ENCODE measurements at regions of chr6 and their contacts with region 1.

Region 1: DNA sequence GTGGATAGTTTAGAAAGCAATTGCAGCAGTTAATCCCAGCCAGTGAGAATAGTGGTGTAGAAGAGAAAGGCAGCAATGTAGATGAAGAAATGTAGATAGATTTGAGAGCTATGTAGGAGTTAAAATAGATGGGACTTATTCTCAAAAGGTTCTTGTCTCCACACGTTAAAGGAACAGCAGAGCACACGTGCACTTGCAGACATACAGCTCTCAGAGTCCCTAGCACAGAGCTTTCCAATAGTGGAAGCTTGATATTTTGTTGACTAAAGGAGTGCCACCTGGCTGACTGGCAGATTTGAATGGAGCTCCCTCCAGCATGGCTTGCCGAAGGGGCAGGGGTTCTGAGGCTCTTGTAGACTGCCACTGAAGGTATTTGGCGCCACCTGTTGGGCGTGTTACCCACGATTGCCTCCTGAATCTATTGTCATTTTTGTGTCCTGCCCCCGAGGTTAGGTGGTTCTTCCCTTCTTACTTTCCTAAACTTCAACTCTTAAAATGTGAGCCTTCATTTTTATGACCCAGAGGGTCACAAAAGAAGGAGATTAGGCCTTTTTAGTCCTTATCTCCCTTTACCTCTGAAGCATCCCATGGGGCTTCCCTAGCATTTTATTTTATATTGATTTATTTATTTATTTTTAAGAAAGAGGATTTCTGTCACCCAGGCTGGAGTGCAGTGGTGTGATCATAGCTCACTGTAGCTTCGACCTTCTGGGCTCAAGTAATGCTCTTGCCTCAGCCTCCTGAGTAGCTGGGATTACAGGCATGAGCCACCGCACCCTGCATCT is 16.4 kb downstream of the BRD2 start:
- DNase-seq: peak; percentile 98
- ATAC-seq: peak; percentile 84
- H3K4me3 Mint-ChIP-seq: no peak overlapping the region
- H3K27ac Mint-ChIP-seq: peak overlapping the region; percentile 68
- H3K4me1 Mint-ChIP-seq: peaks cover 18% of the 10 kb centered on the region
- H3K27me3 Mint-ChIP-seq: no peaks in the 10 kb centered on the region
- CTCF ChIP-seq: peak; percentile 92

Region 2: GRCh38 chr6:32838114-32838958 is 146.5 kb before region 1 on chr6 and contains the start of gene TAP2:
- CTCF ChIA-PET with region 1: interaction called, 40 read pairs
- POLR2A ChIA-PET with region 1: interaction called, 20 read pairs
- intact Hi-C with region 1: no loop called
- DNase-seq: peak; percentile 98
- ATAC-seq: peak; percentile 82
- H3K4me3 Mint-ChIP-seq: peak within 1 kb of the TSS; percentile 79
- H3K27ac Mint-ChIP-seq: peak within 1 kb of the TSS; percentile 99
- H3K4me1 Mint-ChIP-seq: peaks cover 74% of the 10 kb centered on the region
- H3K27me3 Mint-ChIP-seq: no peaks in the 10 kb centered on the region
- CTCF ChIP-seq: peak; percentile 95
- total RNA-seq, gene TAP2: 110 to 113 TPM

Region 3: DNA sequence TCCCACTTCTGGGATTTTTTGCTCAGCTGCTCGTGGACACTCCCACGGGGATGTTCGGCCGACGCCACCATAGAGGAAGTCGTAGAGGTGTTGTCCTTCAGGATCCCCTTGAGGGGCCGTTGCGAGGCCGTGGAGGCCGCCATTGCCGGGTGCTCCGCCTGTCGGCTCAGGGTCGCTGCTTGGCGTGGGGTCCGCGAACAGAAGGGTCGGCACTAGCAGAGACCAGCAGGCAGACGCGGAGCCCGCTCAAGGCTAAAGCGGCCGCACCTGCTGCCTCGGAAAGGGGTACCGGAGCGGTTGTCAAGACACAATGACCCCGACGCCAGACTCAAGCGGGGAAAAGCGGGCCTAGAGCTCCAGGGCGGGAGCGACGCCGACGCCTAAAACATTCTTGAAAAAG is 105.1 kb before region 1 on chr6:
- CTCF ChIA-PET with region 1: interaction called, 82 read pairs
- POLR2A ChIA-PET with region 1: interaction called, 4 read pairs
- intact Hi-C with region 1: loop called (anchors 2 kb)
- DNase-seq: no peak
- ATAC-seq: no peak
- H3K4me3 Mint-ChIP-seq: no peak overlapping the region
- H3K27ac Mint-ChIP-seq: no peak overlapping the region
- H3K4me1 Mint-ChIP-seq: peaks cover 6% of the 10 kb centered on the region
- H3K27me3 Mint-ChIP-seq: no peaks in the 10 kb centered on the region
- CTCF ChIP-seq: no peak

Region 4: DNA sequence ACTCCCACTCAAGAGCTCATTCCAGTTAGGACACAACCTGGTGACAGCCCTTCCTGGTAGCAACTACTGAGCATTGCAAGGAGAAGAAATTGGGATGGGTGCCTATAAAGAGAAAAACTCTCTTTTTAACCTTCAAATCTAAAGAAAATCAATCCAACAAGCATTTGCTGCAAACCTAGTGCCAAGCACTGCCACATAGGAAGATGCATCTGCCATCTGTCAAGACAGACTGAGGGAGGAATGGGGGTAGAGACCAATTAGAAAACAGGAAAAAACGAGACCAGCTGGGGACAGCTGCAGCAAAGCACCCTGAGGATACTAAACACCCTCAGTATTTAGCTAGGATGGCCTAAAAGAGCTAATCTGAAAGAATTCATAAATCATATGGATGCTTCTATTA is 71.8 kb before region 1 on chr6:
- CTCF ChIA-PET with region 1: interaction called, 20 read pairs
- POLR2A ChIA-PET with region 1: no interaction called
- intact Hi-C with region 1: no loop called
- DNase-seq: no peak
- ATAC-seq: no peak
- H3K4me3 Mint-ChIP-seq: no peak overlapping the region
- H3K27ac Mint-ChIP-seq: no peak overlapping the region
- H3K4me1 Mint-ChIP-seq: no peaks in the 10 kb centered on the region
- H3K27me3 Mint-ChIP-seq: peaks cover 8% of the 10 kb centered on the region
- CTCF ChIP-seq: no peak

Region 5: DNA sequence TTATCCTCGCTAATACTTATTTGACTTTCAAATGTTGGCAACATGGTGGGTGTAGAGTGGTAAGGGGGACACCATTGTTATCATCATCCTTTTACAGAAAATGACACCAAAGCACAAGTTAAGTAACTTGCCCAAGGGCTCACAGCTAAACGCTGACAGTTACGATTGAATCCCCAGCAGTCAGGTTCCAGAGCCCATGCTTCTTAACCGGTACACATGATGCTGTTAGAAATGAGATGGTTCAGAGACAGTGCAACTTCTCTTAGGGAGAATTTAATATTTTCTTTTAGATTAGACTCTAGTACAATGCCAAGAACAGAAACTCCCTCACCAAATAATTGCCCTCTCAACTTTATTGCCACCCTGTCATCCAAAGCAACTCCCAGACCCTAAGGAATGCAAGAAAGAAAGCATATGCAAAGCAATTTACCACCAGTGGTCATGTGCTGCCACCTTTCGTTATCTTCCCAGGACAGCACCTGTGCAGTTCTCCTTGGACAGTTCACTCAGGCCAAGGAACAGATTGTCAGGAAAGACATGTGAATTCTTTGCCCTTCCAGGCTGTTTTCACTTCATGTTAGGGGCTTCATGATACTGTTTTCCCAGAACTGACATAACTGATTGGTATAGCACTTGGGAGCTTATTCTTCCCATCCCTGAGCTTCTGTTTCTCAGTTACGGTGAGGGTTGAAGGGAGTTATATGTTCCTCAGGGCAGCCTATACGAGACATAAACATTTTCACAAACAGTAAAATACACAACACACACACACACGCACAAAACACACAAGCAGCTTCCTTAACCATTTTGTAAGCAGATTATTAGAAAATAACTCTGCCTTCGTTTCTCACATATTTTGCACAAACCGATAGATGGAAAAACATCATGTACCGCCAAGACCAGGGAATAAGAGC is 37.0 kb before region 1 on chr6:
- CTCF ChIA-PET with region 1: interaction called, 364 read pairs
- POLR2A ChIA-PET with region 1: interaction called, 852 read pairs
- intact Hi-C with region 1: no loop called
- DNase-seq: peak; percentile 62
- ATAC-seq: no peak
- H3K4me3 Mint-ChIP-seq: no peak overlapping the region
- H3K27ac Mint-ChIP-seq: no peak overlapping the region
- H3K4me1 Mint-ChIP-seq: peaks cover 72% of the 10 kb centered on the region
- H3K27me3 Mint-ChIP-seq: no peaks in the 10 kb centered on the region
- CTCF ChIP-seq: peak; percentile 68

Region 6: DNA sequence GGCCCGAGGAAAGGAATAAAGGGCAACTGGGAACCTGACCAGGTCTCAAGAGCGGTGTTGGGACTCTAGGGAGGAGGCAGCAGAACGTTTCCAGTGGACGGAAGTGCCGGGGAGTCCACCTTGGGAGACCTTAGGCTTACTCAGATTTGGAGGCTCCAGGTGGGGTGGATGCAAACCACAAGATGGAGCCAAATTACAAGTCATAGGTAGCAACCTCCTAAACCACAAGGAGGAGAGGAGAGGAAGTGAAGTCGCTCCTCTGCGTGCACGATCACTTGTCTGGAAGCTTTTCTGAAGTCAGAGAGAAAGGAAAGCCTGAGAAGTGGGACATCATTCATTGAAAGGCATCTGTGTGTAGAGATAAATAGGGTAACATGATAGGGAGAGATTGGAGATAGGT is 15.3 kb after region 1 on chr6:
- CTCF ChIA-PET with region 1: interaction called, 26 read pairs
- POLR2A ChIA-PET with region 1: interaction called, 4 read pairs
- intact Hi-C with region 1: no loop called
- DNase-seq: peak; percentile 55
- ATAC-seq: peak; percentile 70
- H3K4me3 Mint-ChIP-seq: no peak overlapping the region
- H3K27ac Mint-ChIP-seq: no peak overlapping the region
- H3K4me1 Mint-ChIP-seq: peaks cover 6% of the 10 kb centered on the region
- H3K27me3 Mint-ChIP-seq: peaks cover 11% of the 10 kb centered on the region
- CTCF ChIP-seq: peak; percentile 31

Measured in activated CD8-positive, alpha-beta T cell treated with anti-CD3 and anti-CD28 coated beads for 36 hours (primary cell).